Activated CD8-positive, alpha-beta memory T cell treated with anti-CD3 and anti-CD28 coated beads, Interleukin-2, amount 10 ng/mL, durations not matched to agents 7 days and 5 days (primary cell): ENCODE measurements at regions of chr5 and their contacts with region 1.

Region 1: GRCh38 chr5:139774980-139775661 is 20.5 kb upstream of the PSD2 start:
- DNase-seq: peak; percentile 85
- ATAC-seq: peak; percentile 95
- H3K4me3 Mint-ChIP-seq: no peak overlapping the region
- H3K27ac Mint-ChIP-seq: no peak overlapping the region
- H3K4me1 Mint-ChIP-seq: peaks cover 5% of the 10 kb centered on the region
- H3K27me3 Mint-ChIP-seq: peaks cover 13% of the 10 kb centered on the region

Region 2: GRCh38 chr5:139755892-139756671 is 19.0 kb before region 1 on chr5:
- CTCF ChIA-PET with region 1: interaction called, 15 read pairs
- DNase-seq: no peak
- ATAC-seq: no peak
- H3K4me3 Mint-ChIP-seq: no peak overlapping the region
- H3K27ac Mint-ChIP-seq: no peak overlapping the region
- H3K4me1 Mint-ChIP-seq: peaks cover 23% of the 10 kb centered on the region
- H3K27me3 Mint-ChIP-seq: peaks cover 36% of the 10 kb centered on the region

Region 3: DNA sequence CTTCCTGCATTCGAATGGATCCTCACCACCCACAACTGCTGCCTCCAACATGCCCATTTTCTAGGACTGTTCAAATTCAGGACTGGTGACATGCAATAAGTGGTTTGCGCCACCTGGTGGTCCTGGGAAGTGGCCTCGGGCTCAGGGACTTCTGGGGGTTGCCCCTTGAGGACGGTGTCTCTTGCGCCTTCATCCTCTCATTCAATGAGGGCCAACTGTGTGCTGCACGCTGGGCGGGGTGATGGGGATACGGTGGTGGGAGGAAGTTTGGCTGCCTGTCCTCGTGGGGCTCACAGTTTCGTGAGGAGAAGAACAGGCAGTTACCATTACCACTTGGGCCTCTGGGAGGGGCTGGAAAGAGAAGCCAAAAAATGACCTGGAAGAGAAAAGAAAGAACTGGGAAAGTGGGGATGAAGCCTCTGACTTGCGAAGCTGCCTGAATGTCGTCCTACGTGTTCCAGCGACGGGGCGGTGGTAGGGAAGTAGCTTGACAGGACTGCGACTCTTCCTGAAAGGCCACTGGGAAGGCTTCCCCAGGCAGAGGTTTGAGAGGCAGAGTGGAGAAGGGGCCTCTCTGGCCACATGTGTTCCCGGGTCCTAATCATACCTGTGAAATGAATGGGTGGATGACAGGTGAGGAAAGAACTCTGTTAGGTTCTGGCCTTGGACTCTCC is 69.5 kb after region 1 on chr5:
- CTCF ChIA-PET with region 1: interaction called, 16 read pairs
- DNase-seq: peak; percentile 85
- ATAC-seq: peak; percentile 27
- H3K4me3 Mint-ChIP-seq: no peak overlapping the region
- H3K27ac Mint-ChIP-seq: no peak overlapping the region
- H3K4me1 Mint-ChIP-seq: peaks cover 4% of the 10 kb centered on the region
- H3K27me3 Mint-ChIP-seq: peaks cover 51% of the 10 kb centered on the region

Region 4: DNA sequence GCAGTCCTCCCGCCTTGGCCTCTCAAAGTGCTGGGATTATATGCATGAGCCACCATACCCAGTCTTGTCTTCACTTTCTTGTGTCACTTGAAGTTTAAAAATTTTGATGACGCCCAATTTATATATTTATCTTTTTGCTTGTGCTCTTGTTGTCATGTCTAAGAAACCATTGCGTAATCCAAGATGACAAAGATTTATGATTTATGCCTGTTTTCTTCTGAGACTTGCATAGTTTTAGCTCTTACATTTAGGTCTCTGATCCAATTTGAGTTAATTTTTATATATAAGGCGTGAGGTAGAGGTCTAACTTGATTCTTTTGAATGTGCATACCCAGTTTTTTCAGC is 645.1 kb after region 1 on chr5:
- CTCF ChIA-PET with region 1: no interaction called
- DNase-seq: no peak
- ATAC-seq: no peak
- H3K4me3 Mint-ChIP-seq: no peak overlapping the region
- H3K27ac Mint-ChIP-seq: no peak overlapping the region
- H3K4me1 Mint-ChIP-seq: peaks cover 31% of the 10 kb centered on the region
- H3K27me3 Mint-ChIP-seq: no peaks in the 10 kb centered on the region